BJ (cell line): ENCODE measurements at regions of chr16 and their contacts with region 1.

Region 1: DNA sequence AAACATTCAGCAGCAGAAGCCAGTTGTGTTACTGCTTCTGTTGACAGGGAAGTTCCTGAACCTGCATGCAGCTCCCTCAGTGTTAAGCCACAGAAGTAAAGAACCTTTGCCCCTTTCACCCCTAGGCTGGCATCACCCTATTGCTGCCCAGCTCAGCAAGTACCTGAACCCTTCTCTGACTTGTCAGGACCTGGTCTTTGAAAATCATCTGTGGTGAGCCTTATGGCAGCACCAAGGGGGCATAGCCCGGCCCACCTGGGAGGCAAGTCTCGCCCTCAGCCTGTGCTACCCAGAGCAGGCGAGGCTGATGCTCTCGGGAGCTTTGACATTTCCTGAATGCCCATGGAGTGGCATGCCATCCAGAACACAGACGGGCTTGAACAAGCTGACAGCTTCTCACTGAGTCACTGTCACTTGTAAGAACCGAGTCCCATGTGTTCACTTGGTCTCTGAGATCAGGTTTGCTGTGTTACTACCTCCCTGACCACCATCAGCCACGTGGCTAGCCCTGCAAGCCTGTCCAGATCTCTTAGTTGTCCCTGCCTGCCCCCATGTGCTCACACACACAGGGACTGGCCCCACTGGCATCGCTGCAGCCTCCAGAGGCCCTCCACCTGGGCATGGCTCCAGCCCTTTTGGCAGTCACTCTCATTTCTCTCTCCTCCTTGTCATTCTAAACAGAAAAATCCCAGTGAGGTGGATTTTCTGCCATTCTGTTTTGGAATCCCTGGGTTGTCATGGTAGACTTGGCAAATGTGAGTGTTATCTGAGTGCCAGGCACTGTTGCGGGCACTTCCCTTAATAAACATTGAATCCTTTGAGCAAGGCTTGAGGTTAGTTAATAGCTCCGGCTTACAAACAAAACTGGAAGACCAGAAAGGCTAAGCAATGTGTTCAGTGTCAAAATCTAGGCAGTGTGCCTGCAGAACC is 2.9 kb upstream of the CARMIL2 start:
- DNase-seq: no peak
- H3K4me3 ChIP-seq: no peak overlapping the region
- H3K27me3 ChIP-seq: peaks cover 12% of the 10 kb centered on the region
- CTCF ChIP-seq: no peak

Region 2: DNA sequence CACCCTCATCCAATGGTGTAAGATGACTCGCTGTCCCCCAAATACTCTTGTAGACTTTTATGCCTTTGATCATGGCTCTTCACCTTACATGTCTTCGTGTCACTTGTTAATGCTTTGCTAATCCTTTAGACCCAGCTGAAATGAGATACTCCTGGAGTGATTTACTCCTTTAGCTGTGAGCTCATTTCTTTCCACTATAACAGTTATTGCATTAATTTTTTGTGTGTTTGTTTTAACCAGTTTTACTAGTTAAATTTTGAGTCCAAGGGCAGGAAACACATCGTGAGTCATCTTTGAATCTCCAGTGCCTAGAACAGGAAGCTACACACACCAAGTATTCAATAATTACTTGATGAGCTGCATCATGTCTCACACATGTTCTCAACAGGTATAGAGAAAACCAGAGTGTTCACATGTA is 86.2 kb before region 1 on chr16:
- CTCF ChIA-PET with region 1: interaction called, 12 read pairs
- POLR2A ChIA-PET with region 1: no interaction called
- DNase-seq: no peak
- H3K4me3 ChIP-seq: no peak overlapping the region
- H3K27me3 ChIP-seq: no peaks in the 10 kb centered on the region
- CTCF ChIP-seq: no peak

Region 3: GRCh38 chr16:67660564-67661028 is 18.6 kb after region 1 on chr16 and contains the start of gene PARD6A:
- CTCF ChIA-PET with region 1: interaction called, 19 read pairs
- POLR2A ChIA-PET with region 1: no interaction called
- DNase-seq: peak; percentile 59
- H3K4me3 ChIP-seq: peak within 1 kb of the TSS; percentile 98
- H3K27me3 ChIP-seq: no peaks in the 10 kb centered on the region
- CTCF ChIP-seq: no peak
- polyA plus RNA-seq, gene PARD6A: 0.86 and 0.88 TPM in 2 replicates